ENCODE measurements at regions of chr5 and their contacts with region 1.

Region 1: GRCh38 chr5:57221049-57221568 is 47.2 kb downstream of the GPBP1 start:
- DNase-seq: peak; percentile 17
- H3K4me3 Mint-ChIP-seq: no peak overlapping the region
- H3K27ac Mint-ChIP-seq: no peak overlapping the region
- H3K4me1 Mint-ChIP-seq: peaks cover 18% of the 10 kb centered on the region
- H3K27me3 Mint-ChIP-seq: no peaks in the 10 kb centered on the region

Region 2: DNA sequence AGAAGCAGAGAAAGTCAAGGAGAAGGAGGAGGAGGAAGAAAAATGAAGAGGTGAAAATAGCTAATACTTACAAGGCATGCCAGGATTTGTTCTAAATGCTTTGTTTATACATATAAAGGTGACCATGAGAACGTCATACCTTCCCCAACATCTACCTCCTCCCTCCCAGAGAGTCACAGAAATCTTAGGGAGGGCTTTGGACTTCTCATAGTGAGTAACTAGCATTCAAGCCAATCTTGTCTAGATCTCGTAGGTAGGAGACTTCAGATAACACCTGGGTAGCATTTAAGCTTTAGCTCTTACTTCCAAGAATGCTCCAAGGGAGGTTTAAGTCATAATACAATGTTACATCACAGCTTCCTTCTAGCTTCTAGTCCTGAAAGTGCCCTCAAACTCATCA is 83.7 kb before region 1 on chr5:
- intact Hi-C with region 1: loop called (anchors 1 kb)
- DNase-seq: no peak
- H3K4me3 Mint-ChIP-seq: no peak overlapping the region
- H3K27ac Mint-ChIP-seq: no peak overlapping the region
- H3K4me1 Mint-ChIP-seq: no peaks in the 10 kb centered on the region
- H3K27me3 Mint-ChIP-seq: peaks cover 21% of the 10 kb centered on the region

Measured in activated T-helper 1 cell treated with anti-CD3 and anti-CD28 coated beads, Interleukin-12 subunit alpha, Interleukin-12 subunit beta, Interleukin-2, Interleukin-4 antibody, amounts not matched to agents 30 ng/mL and 10 ng/mL and 1 ng/mL, durations not matched to agents 14 hours and 24 hours and 36 hours (primary cell).